ENCODE measurements at regions of chr19 and their contacts with region 1.

Region 1: GRCh38 chr19:52139252-52140031 is at the start of gene ZNF616:
- DNase-seq: peak; percentile 89 to 98
- ATAC-seq: peak; percentile 93 to 100 (median 98)
- H3K4me3 ChIP-seq: peak within 1 kb of the TSS; percentile 61 to 94 (median 80)
- H3K27ac ChIP-seq: peak within 1 kb of the TSS; percentile 42 to 96 (median 92)
- H3K4me1 ChIP-seq: peaks cover 2 to 24% (median 18%) of the 10 kb centered on the region in 9 donors
- H3K27me3 ChIP-seq: no peaks in the 10 kb centered on the region
- CTCF ChIP-seq: peak; percentile 62 to 95 (median 80)
- total RNA-seq, gene ZNF616: 4.9 to 8.0 (median 6.5) TPM

Region 2: DNA sequence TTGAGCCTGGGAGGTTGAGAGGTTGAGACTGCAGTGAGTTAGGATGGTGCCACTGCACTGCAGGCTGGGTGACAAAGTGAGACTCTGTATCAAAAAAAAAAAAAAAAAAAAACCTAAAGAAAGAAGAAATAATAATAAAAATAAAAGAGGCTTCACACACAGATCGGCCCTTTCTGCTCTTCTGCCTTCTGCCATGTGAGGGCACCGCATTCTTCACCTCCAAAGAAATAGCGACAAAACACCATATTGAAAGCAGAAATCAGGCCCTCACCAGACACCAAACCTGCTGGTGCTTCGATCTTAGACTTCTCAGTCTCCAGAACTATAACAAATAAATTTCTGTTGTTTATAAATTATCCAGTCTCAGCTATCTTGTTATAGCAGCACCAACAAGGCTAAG is 237.6 kb before region 1 on chr19:
- intact Hi-C with region 1: no loop called
- DNase-seq: no peak
- ATAC-seq: no peak
- H3K4me3 ChIP-seq: no peak overlapping the region
- H3K27ac ChIP-seq: no peak overlapping the region
- H3K4me1 ChIP-seq: peaks cover 0 to 15% (median 12%) of the 10 kb centered on the region in 9 donors
- H3K27me3 ChIP-seq: peaks cover 0 to 8% (median 4%) of the 10 kb centered on the region in 7 donors
- CTCF ChIP-seq: no peak

Region 3: DNA sequence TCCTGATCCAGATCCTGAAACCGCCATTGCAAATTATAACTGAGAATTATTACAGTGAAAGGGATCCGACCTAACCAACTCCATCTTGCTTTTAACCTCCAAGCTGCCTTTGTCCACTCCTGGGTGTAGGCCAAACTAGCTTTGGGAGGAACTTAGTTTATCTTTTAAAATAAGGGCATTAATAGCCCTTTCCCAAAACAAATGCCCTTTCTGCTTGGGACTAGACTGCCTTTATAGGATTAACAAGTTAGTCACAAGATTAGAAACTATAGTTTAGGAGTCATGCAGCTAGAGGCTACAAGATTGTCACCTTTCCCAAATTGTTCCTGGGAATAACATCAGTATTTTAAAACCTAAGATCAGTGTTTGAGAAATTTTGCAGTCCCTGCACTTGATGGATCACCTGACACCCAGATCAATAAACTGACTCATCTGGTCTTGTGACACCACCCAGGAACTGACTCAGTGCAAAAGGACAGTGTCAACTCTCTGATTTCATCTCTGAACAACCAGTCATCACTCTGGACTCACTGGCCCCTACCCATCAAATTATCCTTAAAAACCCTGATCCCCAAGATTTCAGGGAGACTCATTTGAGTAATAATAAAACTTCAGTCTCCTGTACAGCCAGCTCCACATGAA is 39.8 kb before region 1 on chr19:
- intact Hi-C with region 1: no loop called
- DNase-seq: no peak
- ATAC-seq: no peak
- H3K4me3 ChIP-seq: no peak overlapping the region
- H3K27ac ChIP-seq: no peak overlapping the region
- H3K4me1 ChIP-seq: peaks cover 0 to 6% (median 2%) of the 10 kb centered on the region in 9 donors
- H3K27me3 ChIP-seq: no peaks in the 10 kb centered on the region
- CTCF ChIP-seq: no peak

Region 4: DNA sequence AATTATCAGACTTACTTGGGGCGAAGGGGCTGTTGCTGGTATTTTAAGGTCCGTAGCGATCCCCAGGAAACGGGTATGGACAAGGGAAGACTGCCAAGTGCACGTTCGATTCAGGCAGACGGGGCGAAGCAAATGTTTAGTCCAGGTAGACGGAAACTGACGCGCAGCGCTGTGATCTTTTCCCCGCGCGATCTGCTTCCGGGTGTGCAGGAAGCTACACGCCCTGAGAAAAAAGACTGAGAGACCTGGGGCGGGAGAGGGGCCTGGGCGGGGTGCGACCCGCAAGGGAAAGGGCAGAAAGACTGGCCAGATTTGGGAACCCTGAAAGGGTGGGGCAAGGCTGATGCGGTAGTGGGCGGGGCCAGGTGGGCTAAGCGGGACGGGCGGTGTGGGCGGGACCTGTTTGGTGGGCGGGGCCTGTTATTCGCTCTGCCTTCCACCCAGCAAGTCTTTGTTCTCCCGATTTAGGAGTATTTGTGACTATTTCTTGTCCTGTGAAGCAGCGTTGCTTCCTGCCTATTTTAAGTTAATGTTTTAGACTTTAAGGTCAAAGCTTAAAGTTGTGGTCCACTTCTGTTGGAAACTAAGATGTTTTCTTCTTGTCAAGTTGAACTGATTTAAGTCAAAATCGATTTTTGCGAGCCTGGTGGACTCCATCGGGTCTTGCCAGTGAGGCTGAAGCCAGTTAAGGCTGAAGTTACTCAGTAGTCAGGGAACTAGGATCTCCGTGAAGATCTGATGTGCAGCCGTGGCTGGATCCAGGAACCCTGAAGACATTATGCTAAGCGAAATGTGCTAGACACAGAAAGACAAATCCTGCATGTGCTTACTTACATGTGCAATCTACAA is 32.1 kb after region 1 on chr19 and contains the start of gene ZNF836:
- intact Hi-C with region 1: loop called in 2 of 10 experiments (anchors 2 to 5 kb)
- DNase-seq: peak; percentile 92 to 93
- ATAC-seq: peak; percentile 96 to 99 (median 98)
- H3K4me3 ChIP-seq: peak within 1 kb of the TSS; percentile 74 to 95 (median 80)
- H3K27ac ChIP-seq: peak within 1 kb of the TSS; percentile 43 to 90 (median 85)
- H3K4me1 ChIP-seq: peaks cover 0 to 28% (median 14%) of the 10 kb centered on the region in 9 donors
- H3K27me3 ChIP-seq: no peaks in the 10 kb centered on the region
- CTCF ChIP-seq: no peak
- total RNA-seq, gene ZNF836: 5.1 to 10.6 (median 7.1) TPM

Region 5: GRCh38 chr19:52237771-52238400 is 98.4 kb after region 1 on chr19:
- intact Hi-C with region 1: loop called (anchors 1 to 5 kb)
- DNase-seq: peak; percentile 33 to 46
- ATAC-seq: peak in 7 of 8 donors; percentile 55 to 80 (median 70)
- H3K4me3 ChIP-seq: no peak overlapping the region
- H3K27ac ChIP-seq: no peak overlapping the region
- H3K4me1 ChIP-seq: no peaks in the 10 kb centered on the region
- H3K27me3 ChIP-seq: no peaks in the 10 kb centered on the region
- CTCF ChIP-seq: peak; percentile 76 to 96 (median 92)